Activated naive CD4-positive, alpha-beta T cell treated with anti-CD3 and anti-CD28 coated beads for 36 hours (primary cell): ENCODE measurements at regions of chr4 and their contacts with region 1.

Region 1: GRCh38 chr4:139015269-139015947 is at the start of gene NOCT:
- DNase-seq: peak; percentile 97
- H3K4me3 Mint-ChIP-seq: peak within 1 kb of the TSS; percentile 91
- H3K27ac Mint-ChIP-seq: peak within 1 kb of the TSS; percentile 96
- H3K4me1 Mint-ChIP-seq: peaks cover 48% of the 10 kb centered on the region
- H3K27me3 Mint-ChIP-seq: no peaks in the 10 kb centered on the region
- total RNA-seq, gene NOCT: 9.3 to 10.4 TPM

Region 2: GRCh38 chr4:138242076-138242833 is 773.2 kb before region 1 on chr4 and contains the start of gene SLC7A11:
- CTCF ChIA-PET with region 1: no interaction called
- intact Hi-C with region 1: loop called (anchors 1 kb)
- DNase-seq: peak; percentile 77
- H3K4me3 Mint-ChIP-seq: peak within 1 kb of the TSS; percentile 85
- H3K27ac Mint-ChIP-seq: peak within 1 kb of the TSS; percentile 92
- H3K4me1 Mint-ChIP-seq: peaks cover 11% of the 10 kb centered on the region
- H3K27me3 Mint-ChIP-seq: no peaks in the 10 kb centered on the region
- total RNA-seq, gene SLC7A11: 3.2 to 3.4 TPM

Region 3: DNA sequence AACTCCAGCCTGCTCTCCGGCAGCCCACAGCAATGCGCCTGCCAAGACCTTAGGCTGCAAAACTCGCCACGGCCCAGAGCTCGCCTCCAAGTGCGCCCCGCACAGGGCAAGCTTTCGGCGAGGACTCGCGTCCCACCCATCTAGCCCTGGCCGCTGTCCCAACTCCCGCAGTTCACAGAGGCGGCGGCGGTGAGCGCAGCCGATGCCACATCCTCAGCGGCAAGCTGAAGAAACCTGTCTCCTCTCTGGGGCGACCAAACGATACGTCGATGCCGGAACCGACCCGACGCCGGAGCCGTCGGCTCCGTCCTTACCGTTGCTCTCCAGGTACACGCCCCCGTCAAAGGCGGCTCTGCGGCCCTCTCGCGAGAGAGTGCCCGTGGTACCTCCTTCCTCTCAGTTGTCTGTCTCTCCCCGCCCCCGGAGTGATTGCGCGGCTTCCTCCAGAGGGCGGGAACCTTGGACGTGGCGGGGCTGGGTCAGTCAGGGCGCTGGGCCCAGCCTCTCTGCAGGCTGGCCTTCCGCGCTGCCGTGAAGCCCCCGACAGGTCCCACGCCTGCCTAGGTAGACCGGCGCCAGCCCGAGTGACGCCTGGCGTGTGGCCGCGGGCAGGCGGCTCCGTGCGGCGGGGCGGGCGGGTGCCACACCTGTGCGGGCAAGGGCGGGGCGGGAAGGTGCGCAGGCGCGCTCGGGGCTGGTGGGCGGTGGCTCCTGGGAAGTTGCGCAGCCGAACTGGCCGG is 438.1 kb after region 1 on chr4:
- CTCF ChIA-PET with region 1: interaction called, 3 read pairs
- intact Hi-C with region 1: loop called (anchors 1 kb)
- DNase-seq: peak; percentile 98
- H3K4me3 Mint-ChIP-seq: peak overlapping the region; percentile 97
- H3K27ac Mint-ChIP-seq: peak overlapping the region; percentile 98
- H3K4me1 Mint-ChIP-seq: peaks cover 50% of the 10 kb centered on the region
- H3K27me3 Mint-ChIP-seq: no peaks in the 10 kb centered on the region